PC-9 (cell line): ENCODE measurements at regions of chr7 and their contacts with region 1.

Region 1: GRCh38 chr7:26667500-26668133 is 196.8 kb downstream of the SKAP2 start:
- DNase-seq: peak; percentile 84 to 94
- H3K4me3 ChIP-seq: no peak overlapping the region
- H3K27ac ChIP-seq: no peak overlapping the region
- H3K4me1 ChIP-seq: peaks cover 61% of the 10 kb centered on the region
- H3K27me3 ChIP-seq: no peaks in the 10 kb centered on the region
- CTCF ChIP-seq: peak; percentile 99

Region 2: GRCh38 chr7:25770670-25771069 is 896.9 kb before region 1 on chr7:
- CTCF ChIA-PET with region 1: no interaction called
- POLR2A ChIA-PET with region 1: no interaction called
- intact Hi-C with region 1: no loop called
- DNase-seq: no peak
- H3K4me3 ChIP-seq: no peak overlapping the region
- H3K27ac ChIP-seq: no peak overlapping the region
- H3K4me1 ChIP-seq: no peaks in the 10 kb centered on the region
- H3K27me3 ChIP-seq: peaks cover 93% of the 10 kb centered on the region
- CTCF ChIP-seq: no peak

Region 3: GRCh38 chr7:26090927-26091519 is 576.6 kb before region 1 on chr7:
- CTCF ChIA-PET with region 1: interaction called, 15 read pairs
- POLR2A ChIA-PET with region 1: no interaction called
- intact Hi-C with region 1: loop called (anchors 5 kb)
- DNase-seq: peak in 1 of 2 experiments; percentile 50
- H3K4me3 ChIP-seq: no peak overlapping the region
- H3K27ac ChIP-seq: no peak overlapping the region
- H3K4me1 ChIP-seq: peaks cover 31% of the 10 kb centered on the region
- H3K27me3 ChIP-seq: no peaks in the 10 kb centered on the region
- CTCF ChIP-seq: peak; percentile 92

Region 4: DNA sequence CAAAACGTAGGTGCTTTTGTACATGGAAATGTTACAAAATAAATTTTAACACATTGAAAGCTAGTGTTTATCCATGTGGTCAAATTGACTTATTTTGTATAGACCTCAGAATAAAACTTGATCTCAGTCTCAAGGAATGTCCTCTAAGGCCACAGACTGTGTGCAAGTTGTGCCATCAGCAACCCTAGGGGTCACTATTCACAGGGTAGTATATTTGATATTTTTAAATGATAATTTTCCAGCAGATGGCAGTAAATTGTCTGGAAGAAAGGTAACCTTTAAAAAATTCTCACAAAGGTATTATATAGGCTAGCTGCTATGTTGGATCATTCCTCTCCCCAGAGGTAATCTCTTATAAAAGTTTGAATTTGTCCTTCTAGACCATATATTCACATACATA is 388.8 kb before region 1 on chr7:
- CTCF ChIA-PET with region 1: no interaction called
- POLR2A ChIA-PET with region 1: no interaction called
- intact Hi-C with region 1: loop called (anchors 2 kb)
- DNase-seq: peak in 1 of 2 experiments; percentile 47
- H3K4me3 ChIP-seq: no peak overlapping the region
- H3K27ac ChIP-seq: no peak overlapping the region
- H3K4me1 ChIP-seq: no peaks in the 10 kb centered on the region
- H3K27me3 ChIP-seq: no peaks in the 10 kb centered on the region
- CTCF ChIP-seq: peak; percentile 68

Region 5: DNA sequence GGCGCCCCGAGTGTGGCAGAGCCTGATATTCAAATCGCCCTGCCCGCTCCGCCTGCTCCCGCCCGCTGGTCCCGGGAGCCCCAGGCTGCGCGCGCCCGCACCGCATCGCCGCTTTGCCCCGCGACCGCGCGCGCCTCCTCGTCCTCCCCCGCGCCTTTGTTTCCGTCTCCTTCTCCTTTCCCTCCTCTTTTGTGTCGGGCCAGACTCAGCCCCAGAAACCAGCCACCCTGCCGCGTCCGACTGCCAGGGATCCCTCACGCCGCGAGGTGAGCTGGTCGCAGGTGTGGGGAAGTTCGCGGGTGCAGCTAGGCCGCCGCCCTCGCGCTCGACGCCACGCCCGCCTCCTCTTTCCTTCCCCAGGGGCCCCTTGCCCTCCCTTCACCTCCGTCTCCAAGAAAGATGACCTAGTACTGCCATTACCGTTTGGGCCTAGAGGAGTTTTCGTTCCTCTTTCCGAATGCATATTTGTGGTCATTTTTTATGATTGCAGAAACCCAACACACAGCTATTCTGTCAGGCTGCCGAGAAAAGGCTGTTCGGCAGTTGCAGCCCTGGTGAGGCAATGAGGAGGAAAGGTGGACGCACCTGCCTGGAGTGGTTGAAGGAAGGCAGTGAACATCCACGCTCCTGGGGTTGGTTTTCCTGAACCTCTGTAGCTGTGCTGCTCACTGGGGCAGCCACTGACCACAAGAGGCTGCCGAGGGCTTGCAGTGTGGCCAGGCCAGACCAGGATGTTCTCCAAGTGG is 268.7 kb before region 1 on chr7:
- CTCF ChIA-PET with region 1: interaction called, 4 read pairs
- POLR2A ChIA-PET with region 1: no interaction called
- intact Hi-C with region 1: loop called (anchors 1 kb)
- DNase-seq: peak; percentile 63 to 83
- H3K4me3 ChIP-seq: peak overlapping the region; percentile 71
- H3K27ac ChIP-seq: peak overlapping the region; percentile 36
- H3K4me1 ChIP-seq: peaks cover 9% of the 10 kb centered on the region
- H3K27me3 ChIP-seq: no peaks in the 10 kb centered on the region
- CTCF ChIP-seq: peak; percentile 54; the same call in 1 of the 2 replicates

Region 6: GRCh38 chr7:26500749-26501352 is 166.8 kb before region 1 on chr7:
- CTCF ChIA-PET with region 1: no interaction called
- POLR2A ChIA-PET with region 1: interaction called, 3 read pairs
- intact Hi-C with region 1: loop called (anchors 1 kb)
- DNase-seq: peak in 1 of 2 experiments; percentile 48
- H3K4me3 ChIP-seq: no peak overlapping the region
- H3K27ac ChIP-seq: no peak overlapping the region
- H3K4me1 ChIP-seq: no peaks in the 10 kb centered on the region
- H3K27me3 ChIP-seq: no peaks in the 10 kb centered on the region
- CTCF ChIP-seq: peak; percentile 73

Region 7: DNA sequence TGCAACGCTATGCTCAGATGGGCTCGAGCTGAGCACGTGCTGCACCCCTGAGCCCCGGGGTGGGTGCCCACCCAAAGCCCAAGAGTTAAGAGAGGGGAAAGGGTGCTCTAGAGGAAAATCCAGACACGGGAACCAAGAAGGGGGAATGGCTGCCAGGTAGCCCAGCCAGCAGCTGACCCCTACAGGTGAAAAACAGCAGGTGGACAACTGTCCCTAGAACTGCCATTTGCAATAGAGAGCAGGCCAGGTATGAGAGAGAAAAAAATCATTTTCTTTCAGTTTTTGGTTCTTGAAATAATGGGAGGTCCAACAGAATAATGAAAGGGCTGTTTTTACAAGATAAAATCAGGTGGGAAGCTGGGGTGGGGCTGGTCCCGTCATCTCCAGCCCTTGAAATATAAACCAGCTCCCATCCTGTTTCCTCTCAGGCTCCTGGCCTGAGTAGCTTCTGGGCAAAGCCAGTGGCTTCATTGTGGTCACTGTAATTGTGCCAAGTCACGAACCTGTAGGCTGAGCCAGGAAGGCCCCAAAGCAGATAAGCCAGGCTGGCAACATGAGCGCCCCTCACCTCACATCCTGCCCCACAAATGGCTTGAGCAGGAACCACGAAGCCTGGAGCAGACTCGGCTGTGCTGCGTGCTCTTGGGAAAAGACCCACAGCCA is 118.2 kb before region 1 on chr7:
- CTCF ChIA-PET with region 1: interaction called, 4 read pairs
- POLR2A ChIA-PET with region 1: no interaction called
- intact Hi-C with region 1: loop called (anchors 1 kb)
- DNase-seq: peak; percentile 96 to 100
- H3K4me3 ChIP-seq: peak overlapping the region; percentile 3; the same call in 1 of the 2 replicates
- H3K27ac ChIP-seq: peak overlapping the region; percentile 95
- H3K4me1 ChIP-seq: peaks cover 39% of the 10 kb centered on the region
- H3K27me3 ChIP-seq: no peaks in the 10 kb centered on the region
- CTCF ChIP-seq: peak; percentile 60; the same call in 1 of the 2 replicates

Region 8: DNA sequence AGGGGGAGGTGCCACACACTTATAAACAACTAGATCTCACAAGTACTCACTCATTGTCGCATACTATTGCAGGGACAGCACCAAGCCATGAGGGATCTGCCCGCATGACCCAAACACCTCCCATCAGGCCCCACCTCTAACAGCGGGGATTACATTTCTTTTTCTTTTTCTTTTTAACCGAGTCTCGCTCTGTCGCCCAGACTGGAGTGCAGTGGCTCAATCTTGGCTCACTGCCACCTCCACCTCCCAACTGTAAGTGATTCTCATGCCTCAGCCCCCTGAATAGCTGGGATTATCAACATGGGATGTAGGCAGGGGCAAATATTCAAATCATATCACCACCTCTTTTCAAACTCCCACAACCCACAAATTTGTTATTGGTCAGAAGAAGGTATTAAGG is 120.1 kb after region 1 on chr7:
- CTCF ChIA-PET with region 1: no interaction called
- POLR2A ChIA-PET with region 1: no interaction called
- intact Hi-C with region 1: no loop called
- DNase-seq: no peak
- H3K4me3 ChIP-seq: no peak overlapping the region
- H3K27ac ChIP-seq: no peak overlapping the region
- H3K4me1 ChIP-seq: no peaks in the 10 kb centered on the region
- H3K27me3 ChIP-seq: no peaks in the 10 kb centered on the region
- CTCF ChIP-seq: no peak